Activated T-helper 1 cell treated with anti-CD3 and anti-CD28 coated beads, Interleukin-12 subunit alpha, Interleukin-12 subunit beta, Interleukin-2, Interleukin-4 antibody, amounts not matched to agents 30 ng/mL and 10 ng/mL and 1 ng/mL, durations not matched to agents 14 hours and 24 hours and 36 hours (primary cell): ENCODE measurements at regions of chr10 and their contacts with region 1.

Region 1: GRCh38 chr10:73096449-73097304 is at the start of gene P4HA1:
- DNase-seq: peak; percentile 97
- H3K4me3 Mint-ChIP-seq: peak within 1 kb of the TSS; percentile 96
- H3K27ac Mint-ChIP-seq: peak within 1 kb of the TSS; percentile 94
- H3K4me1 Mint-ChIP-seq: peaks cover 46% of the 10 kb centered on the region
- H3K27me3 Mint-ChIP-seq: peaks cover 2% of the 10 kb centered on the region
- total RNA-seq, gene P4HA1: 52.8 and 54.5 TPM in 2 replicates

Region 2: GRCh38 chr10:72625608-72626443 is 470.9 kb before region 1 on chr10 and contains the start of gene MICU1:
- intact Hi-C with region 1: loop called (anchors 2 kb)
- DNase-seq: peak; percentile 93
- H3K4me3 Mint-ChIP-seq: peak within 1 kb of the TSS; percentile 96
- H3K27ac Mint-ChIP-seq: peak within 1 kb of the TSS; percentile 94
- H3K4me1 Mint-ChIP-seq: peaks cover 13% of the 10 kb centered on the region
- H3K27me3 Mint-ChIP-seq: peaks cover 6% of the 10 kb centered on the region
- total RNA-seq, gene MICU1: 28.4 and 29.5 TPM in 2 replicates

Region 3: GRCh38 chr10:73079779-73080541 is 16.7 kb before region 1 on chr10:
- intact Hi-C with region 1: loop called (anchors 2 kb)
- DNase-seq: no peak
- H3K4me3 Mint-ChIP-seq: no peak overlapping the region
- H3K27ac Mint-ChIP-seq: peak overlapping the region; percentile 79
- H3K4me1 Mint-ChIP-seq: peaks cover 46% of the 10 kb centered on the region
- H3K27me3 Mint-ChIP-seq: no peaks in the 10 kb centered on the region

Region 4: GRCh38 chr10:73159038-73159648 is 62.5 kb after region 1 on chr10:
- intact Hi-C with region 1: loop called (anchors 1 kb)
- DNase-seq: peak; percentile 21
- H3K4me3 Mint-ChIP-seq: no peak overlapping the region
- H3K27ac Mint-ChIP-seq: no peak overlapping the region
- H3K4me1 Mint-ChIP-seq: peaks cover 40% of the 10 kb centered on the region
- H3K27me3 Mint-ChIP-seq: no peaks in the 10 kb centered on the region

Region 5: DNA sequence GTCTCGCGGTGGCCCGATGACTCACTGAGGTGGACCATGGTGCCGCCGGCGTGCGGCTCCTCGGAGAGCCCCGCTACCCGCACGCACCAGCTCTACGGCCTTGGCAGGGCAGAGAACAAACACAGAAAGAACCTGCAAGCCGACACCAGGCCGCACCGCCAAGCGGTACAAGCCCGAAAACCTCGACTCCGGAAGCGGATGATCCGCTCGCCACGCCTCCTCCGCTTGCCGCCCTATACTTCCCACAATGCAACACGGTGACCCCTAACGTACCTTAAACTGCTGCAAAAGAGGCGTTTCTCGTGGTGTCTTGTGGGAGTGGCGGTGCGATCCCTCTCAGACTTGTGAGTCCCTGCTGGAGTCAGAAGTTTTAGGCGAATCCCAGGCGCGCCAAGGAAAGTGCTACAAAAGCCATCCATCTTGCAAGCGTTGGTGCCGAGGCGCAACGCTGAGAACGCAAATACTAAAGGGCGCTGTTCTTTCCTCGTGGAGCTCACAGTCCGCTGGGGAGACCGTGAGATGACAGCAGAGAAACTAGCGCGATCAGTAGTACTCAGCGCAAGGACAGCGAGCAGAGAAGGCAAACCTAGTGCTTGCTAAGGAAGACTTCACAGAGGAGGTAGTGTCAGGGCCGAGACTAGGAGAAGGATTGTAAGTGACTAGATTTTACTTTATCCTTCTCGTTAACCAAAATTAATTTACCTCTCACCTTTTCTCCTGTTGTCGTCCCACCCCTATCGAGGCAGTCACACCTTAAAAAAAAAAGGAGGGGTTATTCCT is 156.0 kb after region 1 on chr10 and contains the start of gene MRPS16:
- intact Hi-C with region 1: loop called (anchors 1 kb)
- DNase-seq: peak; percentile 92
- H3K4me3 Mint-ChIP-seq: peak within 1 kb of the TSS; percentile 97
- H3K27ac Mint-ChIP-seq: peak within 1 kb of the TSS; percentile 95
- H3K4me1 Mint-ChIP-seq: peaks cover 40% of the 10 kb centered on the region
- H3K27me3 Mint-ChIP-seq: no peaks in the 10 kb centered on the region
- total RNA-seq, gene MRPS16: 158 and 160 TPM in 2 replicates